CD8-positive, alpha-beta memory T cell (primary cell): ENCODE measurements at regions of chr2 and their contacts with region 1.

Region 1: DNA sequence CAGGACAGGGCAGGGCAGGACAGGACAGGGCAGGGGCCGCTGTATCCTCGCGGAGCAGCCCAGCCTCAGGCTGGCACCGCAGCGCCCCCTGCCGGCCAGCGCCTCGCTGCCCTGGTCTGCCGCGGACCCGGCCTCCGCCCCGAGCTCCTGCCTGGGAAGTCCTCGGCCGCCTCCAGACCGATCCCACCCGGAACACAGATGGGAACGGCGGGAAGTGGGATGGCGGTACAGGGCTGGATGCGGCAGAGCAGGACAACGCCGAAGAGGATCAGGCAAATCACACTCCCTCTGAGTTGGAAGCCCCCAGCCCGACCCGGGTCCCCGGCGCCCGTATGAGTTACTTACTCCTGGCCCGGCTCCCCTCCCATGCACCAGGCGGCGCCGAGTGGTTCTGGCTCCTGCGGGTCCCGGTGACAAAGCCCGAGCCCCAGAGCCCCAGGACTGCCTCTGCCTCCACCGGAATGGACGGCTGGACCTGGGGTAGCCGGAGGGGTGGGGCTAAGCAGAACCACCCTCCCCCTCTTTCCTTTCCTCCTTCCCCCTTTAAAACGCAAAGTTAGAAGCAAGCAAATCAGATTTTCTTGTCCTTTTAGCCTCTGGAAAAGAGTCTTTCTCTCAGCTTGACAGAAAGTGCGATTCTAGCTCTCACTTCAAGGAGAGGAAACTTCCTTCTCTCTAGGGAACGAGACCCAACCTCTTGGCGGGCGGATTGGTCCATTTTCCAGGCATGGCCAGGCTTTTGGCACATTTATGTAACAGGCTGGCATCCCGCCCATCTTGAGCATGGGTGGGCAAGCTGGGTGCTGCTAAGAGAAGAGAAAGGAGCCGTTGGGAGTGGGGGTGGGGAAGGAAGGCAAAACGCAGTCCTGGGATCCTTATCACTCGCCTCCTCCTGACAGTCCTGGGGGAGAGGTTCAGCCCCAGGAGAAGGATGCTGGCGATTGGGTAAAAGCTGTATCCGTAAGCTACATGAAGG is at the start of gene TP53I3:
- DNase-seq: peak; percentile 76 to 83 (median 80)
- H3K4me3 ChIP-seq: peak within 1 kb of the TSS; percentile 67
- H3K4me3 Mint-ChIP-seq: peak within 1 kb of the TSS; percentile 72 to 88 (median 83)
- H3K27ac ChIP-seq: peak within 1 kb of the TSS; percentile 34
- H3K27ac Mint-ChIP-seq: peak within 1 kb of the TSS; percentile 18 to 88 (median 74)
- H3K4me1 ChIP-seq: peaks cover 14% of the 10 kb centered on the region
- H3K4me1 Mint-ChIP-seq: peaks cover 8 to 20% (median 18%) of the 10 kb centered on the region in 3 donors
- H3K27me3 ChIP-seq: no peaks in the 10 kb centered on the region
- H3K27me3 Mint-ChIP-seq: no peaks in the 10 kb centered on the region
- total RNA-seq, gene TP53I3: 3.9 to 4.3 TPM

Region 2: DNA sequence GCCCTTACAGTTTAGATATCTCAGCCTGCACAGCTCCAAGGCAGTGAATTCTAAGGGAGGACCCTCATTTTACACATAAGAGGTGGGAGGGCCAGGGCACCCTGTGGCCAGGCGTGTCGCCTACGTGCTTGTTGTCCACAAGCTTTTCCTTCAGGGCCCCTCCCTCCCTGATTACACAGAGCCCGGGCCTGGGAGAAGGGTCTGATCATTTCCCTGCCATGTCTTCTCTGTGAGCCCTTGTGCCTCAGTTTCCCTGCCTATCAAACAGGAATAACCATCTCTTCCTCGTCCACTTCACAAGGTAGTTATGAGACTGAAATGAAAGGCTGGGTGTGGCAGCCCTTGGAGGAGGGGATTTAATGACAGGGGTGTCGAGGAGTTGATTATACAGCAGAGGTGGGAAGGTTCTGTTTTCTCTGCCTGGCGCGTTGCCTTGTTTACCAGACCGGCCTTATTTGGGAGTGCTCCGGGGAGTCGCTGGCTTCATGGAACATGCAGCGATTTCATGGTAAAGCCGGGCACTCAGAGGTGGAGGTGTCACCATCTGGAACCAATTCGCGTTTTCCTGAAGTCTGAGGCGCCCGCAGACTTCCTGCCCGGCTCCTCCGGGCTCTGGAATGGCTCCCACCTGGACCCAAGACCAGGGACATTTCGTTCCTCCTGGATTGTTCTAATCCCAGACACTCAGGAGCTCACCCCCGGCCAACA is 490.8 kb before region 1 on chr2:
- CTCF ChIA-PET with region 1: no interaction called
- POLR2A ChIA-PET with region 1: no interaction called
- DNase-seq: no peak
- H3K4me3 ChIP-seq: no peak overlapping the region
- H3K4me3 Mint-ChIP-seq: no peak overlapping the region
- H3K27ac ChIP-seq: no peak overlapping the region
- H3K27ac Mint-ChIP-seq: no peak overlapping the region
- H3K4me1 ChIP-seq: no peaks in the 10 kb centered on the region
- H3K4me1 Mint-ChIP-seq: no peaks in the 10 kb centered on the region
- H3K27me3 ChIP-seq: peaks cover 3% of the 10 kb centered on the region
- H3K27me3 Mint-ChIP-seq: peaks cover 5 to 18% of the 10 kb centered on the region in 2 donors

Region 3: DNA sequence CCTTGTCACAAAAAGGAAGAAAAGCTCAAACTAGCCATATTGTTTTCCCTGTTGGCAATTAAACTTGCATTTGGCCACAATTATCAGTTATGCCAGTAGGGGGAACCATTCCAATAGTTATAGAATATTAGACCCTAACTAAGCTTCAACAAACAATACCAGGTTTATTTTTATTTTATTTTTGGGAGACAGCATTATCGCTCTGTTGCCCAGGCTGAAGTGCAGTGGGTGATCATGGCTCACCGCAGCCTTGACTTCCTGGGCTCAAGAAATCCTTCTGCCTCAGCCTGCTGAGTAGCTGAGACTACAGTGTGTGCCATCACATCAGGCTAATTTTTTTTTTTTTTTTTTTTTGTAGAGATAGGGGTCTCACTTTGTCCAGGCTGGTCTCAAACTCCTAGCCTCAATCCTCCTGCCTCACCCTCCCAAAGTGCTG is 259.9 kb before region 1 on chr2:
- CTCF ChIA-PET with region 1: interaction called, 47 read pairs
- POLR2A ChIA-PET with region 1: interaction called, 3 read pairs
- DNase-seq: peak in 2 of 5 donors; percentile 26 to 44
- H3K4me3 ChIP-seq: no peak overlapping the region
- H3K4me3 Mint-ChIP-seq: no peak overlapping the region
- H3K27ac ChIP-seq: no peak overlapping the region
- H3K27ac Mint-ChIP-seq: peak overlapping the region in 2 of 8 donors; percentile 16 to 71
- H3K4me1 ChIP-seq: no peaks in the 10 kb centered on the region
- H3K4me1 Mint-ChIP-seq: peaks cover 0 to 3% (median 0%) of the 10 kb centered on the region in 3 donors
- H3K27me3 ChIP-seq: no peaks in the 10 kb centered on the region
- H3K27me3 Mint-ChIP-seq: no peaks in the 10 kb centered on the region

Region 4: DNA sequence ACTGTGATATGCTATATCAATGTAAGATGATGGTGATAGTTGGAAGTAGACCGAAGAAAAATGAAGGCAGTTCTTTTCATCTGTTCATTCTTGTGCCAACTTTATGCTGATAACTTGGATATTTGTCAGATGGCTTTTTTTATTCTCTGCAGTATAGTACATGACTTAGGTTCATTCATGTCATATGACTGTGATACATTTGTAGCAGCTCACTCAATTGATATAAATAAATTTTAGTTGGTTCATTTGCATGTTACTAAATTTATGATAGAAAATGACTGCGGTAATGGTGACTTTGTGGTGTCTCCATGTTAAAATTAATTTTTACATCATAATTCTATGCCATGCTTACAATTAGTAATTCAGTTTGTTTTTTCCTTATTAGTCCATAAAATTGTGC is 137.3 kb before region 1 on chr2:
- CTCF ChIA-PET with region 1: no interaction called
- POLR2A ChIA-PET with region 1: no interaction called
- DNase-seq: no peak
- H3K4me3 ChIP-seq: no peak overlapping the region
- H3K4me3 Mint-ChIP-seq: no peak overlapping the region
- H3K27ac ChIP-seq: no peak overlapping the region
- H3K27ac Mint-ChIP-seq: no peak overlapping the region
- H3K4me1 ChIP-seq: no peaks in the 10 kb centered on the region
- H3K4me1 Mint-ChIP-seq: peaks cover 8 to 22% (median 20%) of the 10 kb centered on the region in 3 donors
- H3K27me3 ChIP-seq: no peaks in the 10 kb centered on the region
- H3K27me3 Mint-ChIP-seq: no peaks in the 10 kb centered on the region

Region 5: GRCh38 chr2:23988371-23988770 is 96.3 kb before region 1 on chr2:
- CTCF ChIA-PET with region 1: interaction called, 11 read pairs
- POLR2A ChIA-PET with region 1: no interaction called
- DNase-seq: peak in 2 of 5 donors; percentile 6 to 10
- H3K4me3 ChIP-seq: no peak overlapping the region
- H3K4me3 Mint-ChIP-seq: no peak overlapping the region
- H3K27ac ChIP-seq: no peak overlapping the region
- H3K27ac Mint-ChIP-seq: no peak overlapping the region
- H3K4me1 ChIP-seq: no peaks in the 10 kb centered on the region
- H3K4me1 Mint-ChIP-seq: peaks cover 0 to 1% (median 0%) of the 10 kb centered on the region in 3 donors
- H3K27me3 ChIP-seq: no peaks in the 10 kb centered on the region
- H3K27me3 Mint-ChIP-seq: no peaks in the 10 kb centered on the region

Region 6: DNA sequence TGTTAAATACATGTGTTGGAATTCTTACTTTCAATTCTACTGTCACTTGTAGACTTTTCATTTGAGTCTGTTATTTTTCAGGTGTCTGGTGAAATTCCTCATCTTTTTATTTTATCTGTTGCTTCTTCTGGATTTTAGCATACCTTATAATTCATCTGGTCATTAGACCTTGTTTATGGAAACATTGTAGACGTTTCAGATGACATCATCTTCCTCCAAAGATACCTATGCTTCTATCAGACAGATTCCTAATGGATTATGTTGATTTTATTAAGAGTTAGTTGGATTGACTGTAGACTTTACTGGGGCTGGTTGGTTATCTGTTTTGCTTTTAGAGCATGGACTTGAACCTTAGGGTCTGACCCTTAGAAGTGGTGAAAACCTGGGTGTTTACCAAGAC is 90.1 kb before region 1 on chr2:
- CTCF ChIA-PET with region 1: interaction called, 10 read pairs
- POLR2A ChIA-PET with region 1: no interaction called
- DNase-seq: no peak
- H3K4me3 ChIP-seq: no peak overlapping the region
- H3K4me3 Mint-ChIP-seq: no peak overlapping the region
- H3K27ac ChIP-seq: no peak overlapping the region
- H3K27ac Mint-ChIP-seq: no peak overlapping the region
- H3K4me1 ChIP-seq: no peaks in the 10 kb centered on the region
- H3K4me1 Mint-ChIP-seq: peaks cover 0 to 1% (median 0%) of the 10 kb centered on the region in 3 donors
- H3K27me3 ChIP-seq: no peaks in the 10 kb centered on the region
- H3K27me3 Mint-ChIP-seq: no peaks in the 10 kb centered on the region

Region 7: GRCh38 chr2:24007693-24008092 is 77.0 kb before region 1 on chr2:
- CTCF ChIA-PET with region 1: no interaction called
- POLR2A ChIA-PET with region 1: no interaction called
- DNase-seq: no peak
- H3K4me3 ChIP-seq: no peak overlapping the region
- H3K4me3 Mint-ChIP-seq: no peak overlapping the region
- H3K27ac ChIP-seq: no peak overlapping the region
- H3K27ac Mint-ChIP-seq: no peak overlapping the region
- H3K4me1 ChIP-seq: no peaks in the 10 kb centered on the region
- H3K4me1 Mint-ChIP-seq: peaks cover 9 to 15% (median 9%) of the 10 kb centered on the region in 3 donors
- H3K27me3 ChIP-seq: peaks cover 10% of the 10 kb centered on the region
- H3K27me3 Mint-ChIP-seq: peaks cover 23 to 31% of the 10 kb centered on the region in 2 donors

Region 8: DNA sequence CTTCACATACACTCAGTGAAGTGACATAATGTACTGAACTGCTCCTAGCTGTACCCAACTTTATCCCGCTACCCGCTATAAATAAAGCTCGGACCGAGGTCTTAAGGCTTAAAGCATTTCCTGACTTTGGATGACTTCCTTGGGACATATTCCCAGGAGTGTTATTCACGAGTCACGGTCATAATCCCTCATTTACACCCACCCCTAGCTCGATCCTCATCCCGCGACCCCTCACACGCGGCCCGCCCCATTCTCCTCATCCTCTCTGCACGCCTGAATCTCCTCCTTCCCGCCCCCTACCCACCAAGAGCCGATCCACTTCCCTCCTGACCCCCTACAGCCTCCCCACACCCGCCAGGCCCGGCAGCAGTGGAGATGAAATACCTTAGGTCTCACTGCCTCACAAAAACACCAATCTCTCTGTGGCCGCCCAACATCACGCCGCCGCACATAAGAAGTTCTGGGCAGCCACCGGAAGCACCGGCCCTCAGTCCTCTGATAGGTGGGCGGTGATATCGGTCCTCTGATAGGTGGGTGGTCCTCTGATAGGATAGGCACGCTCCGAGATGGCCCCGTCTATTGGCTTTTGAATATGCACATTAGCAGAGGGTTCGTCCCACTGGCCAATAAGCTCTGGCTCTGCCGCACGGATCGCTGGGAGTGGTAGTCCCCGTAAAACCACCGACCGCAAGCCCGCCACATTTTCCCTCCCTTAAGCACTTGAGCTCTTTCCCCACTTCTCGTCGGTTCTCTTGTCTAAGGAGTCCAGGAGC is 37.6 kb before region 1 on chr2 and contains the start of gene WDCP:
- CTCF ChIA-PET with region 1: interaction called, 14 read pairs
- POLR2A ChIA-PET with region 1: interaction called, 4 read pairs
- DNase-seq: peak; percentile 90 to 96 (median 94)
- H3K4me3 ChIP-seq: peak within 1 kb of the TSS; percentile 70
- H3K4me3 Mint-ChIP-seq: peak within 1 kb of the TSS; percentile 87 to 98 (median 93)
- H3K27ac ChIP-seq: peak within 1 kb of the TSS; percentile 36
- H3K27ac Mint-ChIP-seq: peak within 1 kb of the TSS; percentile 31 to 97 (median 93)
- H3K4me1 ChIP-seq: peaks cover 22% of the 10 kb centered on the region
- H3K4me1 Mint-ChIP-seq: peaks cover 28 to 42% (median 40%) of the 10 kb centered on the region in 3 donors
- H3K27me3 ChIP-seq: peaks cover 7% of the 10 kb centered on the region
- H3K27me3 Mint-ChIP-seq: no peaks in the 10 kb centered on the region
- total RNA-seq, gene WDCP: 29.4 to 31.9 TPM